Esophagus squamous epithelium (tissue), 5 donors: ENCODE measurements at regions of chr22 and their contacts with region 1.

Region 1: DNA sequence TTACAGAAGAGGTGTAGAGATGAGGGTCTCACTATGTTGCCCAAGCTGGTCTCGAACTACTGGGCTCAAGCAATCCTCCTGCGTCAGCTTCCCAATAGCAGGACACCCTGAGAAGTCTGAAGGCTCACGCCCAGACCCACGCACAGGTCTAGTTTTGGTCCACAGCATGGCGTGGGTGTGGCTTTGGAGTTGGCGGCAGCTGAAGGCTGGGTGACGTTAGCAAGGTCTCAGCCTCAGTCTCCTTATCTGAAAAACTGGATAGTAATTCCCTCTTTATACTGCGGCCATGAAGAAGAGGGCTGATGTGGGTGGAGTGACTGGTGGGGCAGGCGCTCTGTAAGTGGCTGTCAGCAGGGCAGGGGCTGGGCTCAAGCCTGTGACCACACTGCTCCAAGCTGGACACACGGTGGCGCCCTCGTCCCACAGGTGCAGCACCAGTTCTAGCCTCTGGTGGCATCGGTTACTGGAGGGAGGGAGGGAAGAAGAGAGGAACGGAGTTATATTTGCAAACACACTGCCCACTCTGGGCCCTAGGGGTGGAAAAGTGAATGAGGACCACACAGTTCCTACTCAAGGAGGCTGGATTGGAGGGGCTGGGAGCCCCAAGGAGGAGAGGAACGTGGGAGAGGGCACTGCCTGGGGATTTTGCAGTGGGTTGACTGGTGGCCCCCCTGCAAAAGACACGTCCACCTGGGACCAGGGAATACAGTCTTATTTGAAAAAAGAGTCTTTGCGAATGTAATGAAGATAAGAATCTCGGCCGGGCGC is 19.6 kb upstream of the CARD10 start:
- DNase-seq: peak; percentile 36
- H3K4me3 ChIP-seq: no peak overlapping the region
- H3K27ac ChIP-seq: peak overlapping the region; percentile 11 to 55 (median 35)
- H3K4me1 ChIP-seq: peaks cover 0 to 48% (median 22%) of the 10 kb centered on the region in 3 donors
- H3K27me3 ChIP-seq: no peaks in the 10 kb centered on the region
- CTCF ChIP-seq: peak; percentile 91 to 99 (median 98)
- POLR2A ChIP-seq: no peak

Region 2: DNA sequence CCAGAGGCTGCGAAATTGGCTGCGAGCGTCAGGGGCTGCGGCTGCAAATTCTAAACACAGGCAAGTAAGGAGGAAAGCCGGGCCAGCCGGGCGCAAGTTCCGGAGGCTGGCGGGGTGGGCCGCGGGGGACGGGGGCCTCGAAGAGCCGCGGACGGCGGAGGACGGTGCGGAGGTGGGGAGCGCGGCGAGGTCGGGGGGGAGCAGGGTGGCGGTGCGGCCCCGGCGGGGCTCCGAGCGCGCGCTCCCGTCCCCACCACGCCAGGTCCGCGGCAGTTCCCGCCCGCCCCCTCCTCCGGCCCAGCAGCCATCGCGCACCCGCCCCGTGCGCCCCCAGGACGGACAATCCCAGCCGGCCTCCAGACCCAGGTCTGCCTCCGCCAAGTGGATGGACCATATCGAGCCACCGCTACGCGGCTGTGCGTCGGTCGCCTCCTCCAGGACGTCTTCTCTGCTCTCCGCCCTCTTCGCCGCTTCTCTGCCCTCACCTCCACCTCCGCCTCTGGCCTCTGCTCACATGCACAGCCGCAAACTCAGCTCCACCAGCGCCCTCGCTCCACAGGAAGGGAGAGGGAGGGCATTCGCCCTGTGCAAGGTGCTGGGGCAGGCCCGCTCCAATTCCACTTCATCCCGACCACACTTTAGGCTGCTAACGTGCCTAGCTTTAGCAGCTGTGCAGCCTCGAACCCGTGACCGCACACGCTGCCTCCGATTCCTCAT is 118.6 kb before region 1 on chr22:
- intact Hi-C with region 1: no loop called
- DNase-seq: no peak
- H3K4me3 ChIP-seq: peak overlapping the region in 2 of 4 donors; percentile 31 to 54
- H3K27ac ChIP-seq: no peak overlapping the region
- H3K4me1 ChIP-seq: peaks cover 9 to 31% (median 19%) of the 10 kb centered on the region in 3 donors
- H3K27me3 ChIP-seq: peaks cover 6 to 100% (median 10%) of the 10 kb centered on the region in 4 donors
- CTCF ChIP-seq: no peak
- POLR2A ChIP-seq: no peak

Region 3: GRCh38 chr22:37571258-37571991 is 32.7 kb after region 1 on chr22:
- intact Hi-C with region 1: loop called (anchors 5 kb)
- DNase-seq: no peak
- H3K4me3 ChIP-seq: no peak overlapping the region
- H3K27ac ChIP-seq: no peak overlapping the region
- H3K4me1 ChIP-seq: peaks cover 26 to 43% (median 32%) of the 10 kb centered on the region in 3 donors
- H3K27me3 ChIP-seq: no peaks in the 10 kb centered on the region
- CTCF ChIP-seq: peak in 1 of 6 experiments; percentile 30
- POLR2A ChIP-seq: no peak